ENCODE measurements at regions of chr22 and their contacts with region 1.

Region 1: GRCh38 chr22:28442264-28442710 is 237.4 kb downstream of the TTC28 start:
- DNase-seq: peak; percentile 81 to 91 (median 86)
- ATAC-seq: peak; percentile 84 to 95 (median 94)
- H3K4me3 ChIP-seq: peak overlapping the region; percentile 41 to 76 (median 66)
- H3K27ac ChIP-seq: peak overlapping the region; percentile 53 to 89 (median 80)
- H3K4me1 ChIP-seq: peaks cover 0 to 39% (median 17%) of the 10 kb centered on the region in 12 donors
- H3K27me3 ChIP-seq: no peaks in the 10 kb centered on the region
- CTCF ChIP-seq: peak; percentile 65 to 84 (median 78)
- POLR2A ChIP-seq: no peak

Region 2: DNA sequence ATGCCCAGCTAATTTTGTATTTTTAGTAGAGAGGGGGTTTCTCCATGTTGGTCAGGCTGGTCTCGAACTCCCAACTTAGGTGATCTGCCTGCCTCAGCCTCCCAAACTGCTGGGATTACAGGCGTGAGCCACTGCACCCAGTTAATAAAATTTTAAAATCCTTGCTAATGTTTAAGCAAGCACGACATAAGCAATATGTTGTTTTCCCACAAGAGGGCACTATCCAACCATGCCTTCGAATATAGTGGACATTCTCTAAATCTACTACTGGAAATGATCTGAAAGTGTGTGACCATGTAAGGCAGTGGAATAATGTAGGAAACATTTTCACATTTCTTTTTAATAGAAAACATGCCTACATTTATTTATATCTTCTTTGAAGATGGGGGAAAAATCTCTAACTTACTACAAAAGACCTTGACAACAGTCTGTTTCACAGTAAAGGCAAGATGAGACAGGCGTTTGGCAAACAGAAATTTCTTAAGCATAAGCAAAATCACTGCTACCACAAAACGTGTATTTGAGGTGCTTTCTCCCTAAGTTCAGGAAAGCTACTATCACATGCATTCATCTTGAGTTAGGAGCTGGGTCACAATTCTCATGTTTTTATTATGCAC is 561.4 kb before region 1 on chr22:
- intact Hi-C with region 1: loop called in 1 of 10 experiments (anchors 10 kb)
- DNase-seq: peak in 1 of 5 donors; percentile 39
- ATAC-seq: peak; percentile 72 to 79 (median 76)
- H3K4me3 ChIP-seq: no peak overlapping the region
- H3K27ac ChIP-seq: peak overlapping the region in 6 of 12 donors; percentile 12 to 81 (median 36)
- H3K4me1 ChIP-seq: peaks cover 9 to 72% (median 50%) of the 10 kb centered on the region in 12 donors
- H3K27me3 ChIP-seq: no peaks in the 10 kb centered on the region
- CTCF ChIP-seq: peak; percentile 71 to 90 (median 84)
- POLR2A ChIP-seq: no peak

Region 3: DNA sequence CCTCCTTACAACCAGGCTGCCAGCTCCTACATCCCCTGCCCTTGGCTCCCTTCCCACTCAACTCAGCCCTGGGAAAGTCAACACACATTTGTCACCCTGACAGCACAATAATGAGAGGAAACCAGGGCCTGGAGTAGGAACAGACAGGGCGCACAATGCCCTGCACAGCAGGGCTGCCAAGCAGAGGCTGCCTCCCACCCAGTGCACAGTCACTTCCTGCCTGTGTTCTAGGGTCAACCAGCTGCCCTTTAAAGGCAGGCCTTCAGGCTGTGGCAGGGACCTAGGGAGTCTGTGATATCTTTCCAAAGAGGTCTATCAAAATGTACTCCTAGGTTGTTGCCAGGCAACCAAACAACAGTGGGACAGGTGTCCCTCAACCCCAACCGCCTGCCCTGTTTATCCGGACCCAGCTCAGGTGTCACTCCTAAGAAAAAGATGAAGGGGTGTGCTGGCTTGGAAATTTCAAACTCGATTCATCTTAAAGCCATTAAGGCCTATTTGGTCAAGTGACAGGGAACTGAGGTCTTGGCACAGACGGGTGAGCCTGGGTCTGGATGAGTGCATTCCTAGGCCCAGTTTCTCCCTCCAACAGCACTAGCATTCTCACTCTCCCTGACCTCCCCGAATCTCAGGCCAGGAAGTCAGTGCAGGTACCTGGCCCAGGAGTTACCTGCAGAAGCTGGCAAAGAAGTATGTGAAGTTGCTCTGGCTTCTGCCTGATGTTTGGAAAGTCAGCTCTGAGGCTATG is 412.9 kb before region 1 on chr22:
- intact Hi-C with region 1: loop called in 6 of 10 experiments (anchors 5 to 10 kb)
- DNase-seq: peak; percentile 57 to 79 (median 64)
- ATAC-seq: peak; percentile 59 to 86 (median 79)
- H3K4me3 ChIP-seq: no peak overlapping the region
- H3K27ac ChIP-seq: peak overlapping the region; percentile 43 to 75 (median 62)
- H3K4me1 ChIP-seq: peaks cover 19 to 77% (median 46%) of the 10 kb centered on the region in 12 donors
- H3K27me3 ChIP-seq: no peaks in the 10 kb centered on the region
- CTCF ChIP-seq: no peak
- POLR2A ChIP-seq: no peak

Region 4: DNA sequence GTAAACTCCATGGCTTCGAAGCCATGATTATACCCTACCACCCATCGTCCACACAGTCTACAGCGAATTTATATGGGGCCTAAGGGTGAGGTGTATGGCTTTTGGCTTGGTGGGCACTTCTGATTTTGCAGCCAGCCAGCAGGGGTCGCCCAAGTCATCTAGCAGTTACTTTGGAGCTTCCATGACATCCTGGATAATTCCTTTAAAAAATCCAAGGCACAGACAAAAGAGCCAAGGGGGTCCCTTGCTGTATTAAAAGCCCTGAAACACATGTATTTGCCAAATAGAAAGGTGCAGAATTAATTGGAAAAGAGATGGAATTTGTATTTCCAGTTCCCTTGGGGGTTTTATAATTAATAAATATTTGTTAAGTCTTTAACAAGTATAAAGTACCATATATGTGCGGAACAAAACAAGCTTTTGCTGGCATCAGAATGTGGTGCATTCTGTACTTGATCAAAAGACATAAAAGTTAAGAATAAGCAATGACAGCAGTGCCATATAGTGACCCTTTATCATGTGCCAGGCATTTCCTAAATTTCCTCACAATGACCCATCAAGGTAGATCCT is 390.4 kb before region 1 on chr22:
- intact Hi-C with region 1: loop called in 8 of 10 experiments (anchors 1 to 10 kb)
- DNase-seq: peak; percentile 56 to 79 (median 69)
- ATAC-seq: peak in 3 of 4 donors; percentile 62 to 77 (median 66)
- H3K4me3 ChIP-seq: no peak overlapping the region
- H3K27ac ChIP-seq: no peak overlapping the region
- H3K4me1 ChIP-seq: peaks cover 0 to 22% (median 5%) of the 10 kb centered on the region in 12 donors
- H3K27me3 ChIP-seq: no peaks in the 10 kb centered on the region
- CTCF ChIP-seq: peak; percentile 70 to 95 (median 89)
- POLR2A ChIP-seq: no peak

Region 5: DNA sequence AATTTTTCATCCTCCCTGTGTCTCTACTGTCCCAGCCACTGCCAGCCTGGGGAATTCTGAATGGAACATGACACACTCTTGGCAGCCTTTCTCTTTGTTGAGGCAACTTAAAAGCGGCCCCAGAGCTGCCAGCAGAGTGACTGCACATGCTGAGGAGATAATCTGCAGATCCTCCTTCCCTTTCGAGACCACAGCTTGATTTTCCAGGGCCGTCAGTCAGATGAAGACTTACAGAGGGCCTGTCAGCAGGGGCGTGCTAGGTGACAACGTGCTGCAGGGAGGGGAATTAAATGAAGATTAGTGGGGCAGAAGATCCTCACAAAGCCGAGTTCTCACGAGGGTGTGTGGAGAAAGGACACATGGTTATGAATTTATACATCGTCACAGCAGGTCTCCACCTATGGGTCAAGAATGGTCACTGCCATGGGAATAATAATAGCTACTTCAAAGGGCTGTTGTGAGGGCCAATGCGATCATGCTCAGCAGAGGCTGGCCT is 329.7 kb before region 1 on chr22:
- intact Hi-C with region 1: loop called in 2 of 10 experiments (anchors 5 to 10 kb)
- DNase-seq: peak in 4 of 5 donors; percentile 35 to 78 (median 63)
- ATAC-seq: peak; percentile 72 to 80 (median 76)
- H3K4me3 ChIP-seq: peak overlapping the region in 1 of 12 donors; percentile 27
- H3K27ac ChIP-seq: peak overlapping the region in 11 of 12 donors; percentile 27 to 75 (median 50)
- H3K4me1 ChIP-seq: peaks cover 0 to 39% (median 15%) of the 10 kb centered on the region in 12 donors
- H3K27me3 ChIP-seq: no peaks in the 10 kb centered on the region
- CTCF ChIP-seq: peak; percentile 20 to 59 (median 43)
- POLR2A ChIP-seq: no peak

Region 6: DNA sequence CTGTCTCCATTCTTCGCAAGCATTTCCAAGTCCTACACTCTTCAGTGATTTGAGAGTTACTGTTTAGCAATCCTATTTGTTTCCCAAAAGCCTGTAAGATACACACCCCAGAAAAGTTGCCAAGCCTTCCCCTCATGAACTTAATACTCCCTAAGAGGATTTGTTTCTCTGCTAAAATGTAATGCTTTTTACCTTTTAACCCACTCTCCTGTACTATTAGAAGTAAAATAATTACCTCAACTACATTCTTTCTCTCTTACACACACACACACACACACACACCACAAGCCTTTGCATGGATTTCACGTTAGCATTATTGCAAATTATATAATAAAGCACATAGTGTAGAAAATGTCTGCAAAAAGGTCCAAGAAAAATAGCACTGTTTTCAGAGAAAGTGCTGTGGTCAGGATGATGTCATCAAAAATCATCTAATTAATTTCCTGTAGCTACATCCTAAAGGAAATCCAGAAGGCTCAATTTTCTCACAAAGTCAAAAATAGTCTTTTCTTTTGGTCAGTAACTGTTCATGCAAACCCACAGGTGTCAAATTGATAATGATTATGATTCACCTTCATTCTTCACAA is 159.1 kb before region 1 on chr22:
- intact Hi-C with region 1: loop called in 1 of 10 experiments (anchors 10 kb)
- DNase-seq: no peak
- ATAC-seq: peak in 2 of 4 donors; percentile 14 to 45
- H3K4me3 ChIP-seq: no peak overlapping the region
- H3K27ac ChIP-seq: no peak overlapping the region
- H3K4me1 ChIP-seq: peaks cover 0 to 27% (median 5%) of the 10 kb centered on the region in 12 donors
- H3K27me3 ChIP-seq: no peaks in the 10 kb centered on the region
- CTCF ChIP-seq: no peak
- POLR2A ChIP-seq: no peak

Region 7: GRCh38 chr22:28582806-28583205 is 140.5 kb after region 1 on chr22:
- intact Hi-C with region 1: loop called in 1 of 10 experiments (anchors 10 kb)
- DNase-seq: no peak
- ATAC-seq: peak in 1 of 4 donors; percentile 41
- H3K4me3 ChIP-seq: peak overlapping the region in 1 of 12 donors; percentile 12
- H3K27ac ChIP-seq: no peak overlapping the region
- H3K4me1 ChIP-seq: peaks cover 0 to 3% (median 0%) of the 10 kb centered on the region in 12 donors
- H3K27me3 ChIP-seq: no peaks in the 10 kb centered on the region
- CTCF ChIP-seq: no peak
- POLR2A ChIP-seq: no peak

Measured in heart left ventricle (tissue), 16 donors.